Prostate gland (tissue), 2 donors: ENCODE measurements at regions of chr6 and their contacts with region 1.

Region 1: GRCh38 chr6:30533460-30534294 is 22.6 kb downstream of the GNL1 start:
- DNase-seq: no peak
- H3K4me3 ChIP-seq: no peak overlapping the region
- H3K27ac ChIP-seq: no peak overlapping the region
- H3K4me1 ChIP-seq: no peaks in the 10 kb centered on the region
- H3K27me3 ChIP-seq: no peaks in the 10 kb centered on the region
- CTCF ChIP-seq: no peak
- POLR2A ChIP-seq: no peak

Region 2: GRCh38 chr6:30311101-30311500 is 222.6 kb before region 1 on chr6:
- intact Hi-C with region 1: no loop called
- DNase-seq: no peak
- H3K4me3 ChIP-seq: no peak overlapping the region
- H3K27ac ChIP-seq: no peak overlapping the region
- H3K4me1 ChIP-seq: no peaks in the 10 kb centered on the region
- H3K27me3 ChIP-seq: no peaks in the 10 kb centered on the region
- CTCF ChIP-seq: no peak
- POLR2A ChIP-seq: no peak

Region 3: GRCh38 chr6:30483677-30484279 is 49.9 kb before region 1 on chr6:
- intact Hi-C with region 1: loop called (anchors 5 kb)
- DNase-seq: peak; percentile 32
- H3K4me3 ChIP-seq: no peak overlapping the region
- H3K27ac ChIP-seq: no peak overlapping the region
- H3K4me1 ChIP-seq: no peaks in the 10 kb centered on the region
- H3K27me3 ChIP-seq: peaks cover 15% of the 10 kb centered on the region
- CTCF ChIP-seq: peak in 3 of 4 experiments; percentile 48 to 68 (median 62)
- POLR2A ChIP-seq: no peak

Region 4: DNA sequence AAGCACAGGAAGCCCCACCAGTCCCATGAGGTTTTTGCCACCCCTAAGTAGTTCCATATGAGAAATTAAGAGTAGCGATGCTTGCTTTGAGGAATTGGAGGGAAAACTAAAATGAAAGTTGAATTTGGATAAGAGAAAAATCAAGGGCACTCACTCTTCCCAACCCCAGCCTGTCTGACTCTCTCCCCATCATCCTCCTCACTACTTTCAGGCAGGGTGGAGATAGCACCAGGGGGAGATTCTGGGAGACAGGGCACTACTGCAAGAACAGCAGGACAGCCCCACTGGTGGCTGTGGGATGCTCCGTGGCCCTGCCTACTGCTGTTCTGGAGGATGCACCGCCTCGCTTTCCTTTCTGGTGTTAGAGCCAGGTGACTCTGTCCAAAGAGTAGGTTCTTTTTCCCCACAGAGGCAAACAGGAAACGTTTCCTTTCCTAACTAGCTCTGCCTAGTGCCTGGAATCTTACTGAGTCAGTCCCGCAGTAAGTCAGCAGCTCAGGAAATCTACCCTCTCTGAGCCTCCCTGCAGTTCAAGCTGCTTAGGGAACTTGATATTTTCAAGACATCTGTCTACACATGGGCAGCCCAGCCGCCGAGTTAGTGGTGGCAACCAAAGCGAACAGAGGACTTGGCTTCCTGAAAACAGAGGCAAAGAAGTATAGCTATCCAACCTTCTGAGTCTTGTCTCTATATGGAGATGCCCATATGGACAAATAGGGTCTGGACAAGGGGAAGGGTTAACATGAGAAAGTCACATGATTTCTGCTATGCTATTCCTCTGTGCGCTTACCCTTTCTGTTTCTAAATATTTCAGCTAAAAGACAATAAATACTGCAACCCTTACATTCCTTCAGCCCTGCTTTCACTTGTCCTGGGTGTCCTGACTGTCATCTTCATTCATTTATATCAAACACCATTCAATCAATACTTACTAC is 33.0 kb before region 1 on chr6:
- intact Hi-C with region 1: no loop called
- DNase-seq: no peak
- H3K4me3 ChIP-seq: no peak overlapping the region
- H3K27ac ChIP-seq: peak overlapping the region in 1 of 2 donors; percentile 14
- H3K4me1 ChIP-seq: no peaks in the 10 kb centered on the region
- H3K27me3 ChIP-seq: no peaks in the 10 kb centered on the region
- CTCF ChIP-seq: no peak
- POLR2A ChIP-seq: no peak

Region 5: DNA sequence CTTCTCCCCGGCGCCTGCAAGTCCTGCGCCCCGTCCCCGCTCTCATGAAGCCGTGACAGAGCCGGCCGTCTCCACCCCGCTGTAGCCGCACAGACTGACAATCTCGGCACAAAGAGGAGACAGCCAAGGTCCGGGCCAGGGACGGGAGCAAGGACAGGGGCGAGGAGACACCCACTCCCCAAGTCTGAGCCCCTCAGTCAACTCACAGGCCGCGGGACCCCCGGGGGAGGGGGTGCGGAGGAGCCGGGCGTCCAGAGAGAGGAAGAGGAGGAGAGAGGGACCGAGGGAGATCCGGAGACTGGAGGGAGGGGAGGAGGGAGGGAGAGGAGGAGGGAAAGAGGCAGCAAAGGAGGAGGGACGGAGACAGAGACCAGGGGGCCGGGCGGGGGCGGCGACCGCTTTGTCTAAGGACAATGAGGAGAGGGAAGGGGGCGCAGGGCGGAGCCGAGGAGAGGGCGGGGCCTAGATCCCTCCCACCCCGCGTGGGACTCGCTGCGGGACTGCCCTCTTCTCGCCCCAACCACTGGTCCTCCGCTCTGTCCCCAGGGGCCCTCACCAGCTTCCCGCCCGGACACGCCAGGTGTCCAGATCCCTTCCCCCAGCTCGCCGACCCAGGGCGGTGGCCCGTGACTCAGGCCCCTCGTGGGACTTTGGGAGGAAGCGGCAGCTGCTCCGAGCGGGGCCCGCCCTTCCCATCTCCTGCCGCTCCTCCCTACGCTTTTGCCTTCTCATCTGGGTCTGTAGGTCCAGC is 153.4 kb after region 1 on chr6:
- intact Hi-C with region 1: no loop called
- DNase-seq: peak; percentile 76
- H3K4me3 ChIP-seq: peak overlapping the region; percentile 66 to 88
- H3K27ac ChIP-seq: peak overlapping the region; percentile 92 to 97
- H3K4me1 ChIP-seq: peaks cover 4% of the 10 kb centered on the region
- H3K27me3 ChIP-seq: no peaks in the 10 kb centered on the region
- CTCF ChIP-seq: no peak
- POLR2A ChIP-seq: peak; percentile 63

Region 6: GRCh38 chr6:30974488-30975252 is 441.0 kb after region 1 on chr6:
- intact Hi-C with region 1: no loop called
- DNase-seq: no peak
- H3K4me3 ChIP-seq: no peak overlapping the region
- H3K27ac ChIP-seq: no peak overlapping the region
- H3K4me1 ChIP-seq: no peaks in the 10 kb centered on the region
- H3K27me3 ChIP-seq: no peaks in the 10 kb centered on the region
- CTCF ChIP-seq: no peak
- POLR2A ChIP-seq: no peak